Breast epithelium (tissue), 4 donors: ENCODE measurements at regions of chr1 and their contacts with region 1.

Region 1: DNA sequence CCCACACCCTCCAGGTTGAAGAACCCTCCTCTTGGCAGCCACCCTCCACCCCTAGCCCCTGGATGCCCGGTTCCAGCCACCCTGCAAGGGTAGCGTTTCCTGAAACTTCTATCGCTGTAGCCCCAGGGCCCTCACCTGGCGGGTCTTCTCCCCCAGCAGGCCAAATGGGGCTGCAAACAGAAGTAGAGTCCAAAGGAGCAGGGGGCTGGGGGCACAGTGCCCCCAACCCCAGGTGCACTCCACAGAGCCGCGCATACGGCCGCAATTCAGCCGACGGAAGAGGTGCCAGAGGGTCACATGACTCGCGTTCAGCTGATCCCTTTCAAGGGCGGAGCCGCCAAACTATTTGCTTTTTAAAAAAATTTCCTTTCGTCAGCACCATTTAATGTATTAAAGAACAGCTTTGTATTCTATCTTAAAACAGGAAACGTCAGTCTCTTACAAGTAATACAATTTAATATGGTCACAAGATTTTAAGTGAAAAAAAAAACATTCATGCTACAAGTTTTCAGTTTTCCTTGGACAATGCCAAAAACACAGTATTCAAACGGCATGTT is at the start of gene GLMP:
- DNase-seq: peak; percentile 41 to 62
- H3K4me3 ChIP-seq: peak within 1 kb of the TSS; percentile 64 to 79 (median 69)
- H3K27ac ChIP-seq: peak within 1 kb of the TSS; percentile 68 to 69
- H3K4me1 ChIP-seq: peaks cover 0 to 3% of the 10 kb centered on the region in 2 donors
- H3K27me3 ChIP-seq: no peaks in the 10 kb centered on the region
- CTCF ChIP-seq: no peak
- POLR2A ChIP-seq: no peak
- total RNA-seq, gene GLMP: 36.4 to 68.5 (median 40.2) TPM

Region 2: GRCh38 chr1:154802982-154803920 is 1492.2 kb before region 1 on chr1:
- intact Hi-C with region 1: loop called (anchors 5 kb)
- DNase-seq: no peak
- H3K4me3 ChIP-seq: no peak overlapping the region
- H3K27ac ChIP-seq: no peak overlapping the region
- H3K4me1 ChIP-seq: no peaks in the 10 kb centered on the region
- H3K27me3 ChIP-seq: peaks cover 0 to 2% of the 10 kb centered on the region in 2 donors
- CTCF ChIP-seq: no peak
- POLR2A ChIP-seq: no peak

Region 3: DNA sequence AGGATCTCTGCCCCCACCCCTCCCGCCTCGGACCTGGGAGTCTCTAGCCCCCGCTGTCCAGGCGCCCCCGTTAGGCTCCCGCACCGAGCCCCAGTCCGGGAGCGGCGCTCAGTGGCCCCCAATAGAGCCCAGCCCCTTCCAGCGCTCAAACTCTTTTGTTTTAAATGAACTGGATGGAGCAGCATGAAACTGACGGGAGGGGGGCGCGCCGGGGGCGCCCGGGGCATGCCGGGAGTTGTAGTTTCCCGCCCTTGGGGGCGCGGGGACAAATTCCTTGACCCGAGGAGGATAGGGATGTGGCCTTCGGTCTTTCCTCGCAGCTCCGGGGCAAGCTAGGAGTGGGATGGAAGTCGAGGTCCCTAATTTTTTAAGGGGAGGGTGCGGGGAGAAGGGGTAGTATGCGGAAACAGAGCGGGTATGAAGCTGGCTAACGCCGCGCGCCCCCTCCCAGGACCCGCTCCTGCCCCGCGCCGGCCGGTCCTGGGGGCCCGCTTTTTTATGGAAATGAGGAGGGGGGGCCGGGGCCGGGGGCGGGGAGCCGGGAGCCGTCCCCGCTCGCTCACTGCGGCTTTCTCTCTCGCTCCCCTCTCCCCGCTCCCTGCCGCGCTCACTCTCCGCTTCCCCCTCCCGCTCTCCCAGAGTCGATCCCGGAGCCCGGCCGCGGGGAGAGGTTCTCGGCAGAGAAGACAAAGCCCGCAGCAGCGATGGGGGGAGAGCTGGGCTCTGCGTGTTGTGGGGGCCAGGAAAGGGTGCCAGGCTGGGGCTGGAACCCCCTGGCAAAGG is 213.0 kb before region 1 on chr1 and contains the start of gene MEX3A:
- intact Hi-C with region 1: loop called (anchors 2 kb)
- DNase-seq: peak; percentile 68 to 75
- H3K4me3 ChIP-seq: peak within 1 kb of the TSS; percentile 89 to 95 (median 93)
- H3K27ac ChIP-seq: peak within 1 kb of the TSS; percentile 61 to 79
- H3K4me1 ChIP-seq: peaks cover 0 to 5% of the 10 kb centered on the region in 2 donors
- H3K27me3 ChIP-seq: no peaks in the 10 kb centered on the region
- CTCF ChIP-seq: no peak
- POLR2A ChIP-seq: no peak
- total RNA-seq, gene MEX3A: 0.32 to 1.3 (median 1.3) TPM

Region 4: DNA sequence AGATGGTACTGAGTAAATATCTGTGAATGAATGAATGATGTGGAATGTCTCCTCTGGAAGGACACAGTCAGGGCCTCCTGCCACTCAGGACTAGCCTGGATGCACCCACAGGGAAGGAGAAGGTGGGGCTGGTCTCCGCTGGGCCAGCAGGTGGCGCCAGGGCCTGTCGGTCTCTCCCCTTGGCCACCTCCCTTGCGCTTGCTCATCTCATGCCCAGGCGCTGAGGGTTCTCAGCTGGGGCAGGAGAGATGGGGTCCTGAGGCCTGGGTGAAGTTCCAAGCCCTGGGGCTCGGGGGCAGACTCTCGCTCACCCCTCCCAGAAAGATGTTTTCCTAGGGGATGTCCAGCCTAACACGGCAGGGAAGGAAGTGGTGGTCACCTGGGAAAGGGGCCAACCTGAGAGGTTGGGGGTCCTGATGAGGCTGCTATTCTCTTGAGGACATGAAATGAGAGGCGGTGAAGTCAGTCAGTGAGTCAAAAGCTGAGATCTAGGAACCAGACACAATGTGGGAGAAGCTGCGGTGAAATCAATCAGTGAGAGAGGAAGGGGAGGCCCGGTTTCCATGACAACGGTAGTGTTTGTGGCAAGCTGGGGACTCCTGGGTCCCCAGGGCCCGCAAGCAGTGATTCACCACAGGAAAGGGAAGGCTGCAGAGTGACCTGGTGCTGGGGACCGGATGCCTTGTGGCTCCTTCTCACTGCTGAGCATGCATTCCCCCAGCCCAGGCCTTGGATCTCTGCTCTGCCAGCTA is 198.7 kb before region 1 on chr1:
- intact Hi-C with region 1: no loop called
- DNase-seq: peak; percentile 89 to 94
- H3K4me3 ChIP-seq: peak overlapping the region in 1 of 3 donors; percentile 34
- H3K27ac ChIP-seq: peak overlapping the region; percentile 91 to 92
- H3K4me1 ChIP-seq: peaks cover 4 to 13% of the 10 kb centered on the region in 2 donors
- H3K27me3 ChIP-seq: no peaks in the 10 kb centered on the region
- CTCF ChIP-seq: peak; percentile 93 to 98 (median 98)
- POLR2A ChIP-seq: no peak

Region 5: GRCh38 chr1:156262461-156263287 is 32.8 kb before region 1 on chr1:
- intact Hi-C with region 1: no loop called
- DNase-seq: no peak
- H3K4me3 ChIP-seq: no peak overlapping the region
- H3K27ac ChIP-seq: no peak overlapping the region
- H3K4me1 ChIP-seq: no peaks in the 10 kb centered on the region
- H3K27me3 ChIP-seq: no peaks in the 10 kb centered on the region
- CTCF ChIP-seq: no peak
- POLR2A ChIP-seq: no peak

Region 6: GRCh38 chr1:156279837-156280236 is 15.6 kb before region 1 on chr1:
- intact Hi-C with region 1: loop called (anchors 2 kb)
- DNase-seq: no peak
- H3K4me3 ChIP-seq: no peak overlapping the region
- H3K27ac ChIP-seq: no peak overlapping the region
- H3K4me1 ChIP-seq: peaks cover 0 to 18% of the 10 kb centered on the region in 2 donors
- H3K27me3 ChIP-seq: no peaks in the 10 kb centered on the region
- CTCF ChIP-seq: no peak
- POLR2A ChIP-seq: no peak

Region 7: GRCh38 chr1:156435545-156436141 is 140.2 kb after region 1 on chr1:
- intact Hi-C with region 1: no loop called
- DNase-seq: no peak
- H3K4me3 ChIP-seq: peak overlapping the region; percentile 31 to 62 (median 39)
- H3K27ac ChIP-seq: no peak overlapping the region
- H3K4me1 ChIP-seq: no peaks in the 10 kb centered on the region
- H3K27me3 ChIP-seq: peaks cover 3 to 85% of the 10 kb centered on the region in 2 donors
- CTCF ChIP-seq: no peak
- POLR2A ChIP-seq: no peak